IMR-90 (cell line): ENCODE measurements at regions of chr6 and their contacts with region 1.

Region 1: GRCh38 chr6:56637640-56638039 is 5.0 kb downstream of the DST start:
- DNase-seq: peak; percentile 80
- ATAC-seq: peak; percentile 81
- H3K4me3 ChIP-seq: no peak overlapping the region
- H3K27ac ChIP-seq: no peak overlapping the region
- H3K4me1 ChIP-seq: peaks cover 5% of the 10 kb centered on the region
- H3K27me3 ChIP-seq: no peaks in the 10 kb centered on the region
- CTCF ChIP-seq: peak; percentile 74
- POLR2A ChIP-seq: no peak
- RAD21 ChIP-seq: peak; percentile 78

Region 2: GRCh38 chr6:56570413-56571359 is 67.0 kb before region 1 on chr6:
- CTCF ChIA-PET with region 1: no interaction called
- POLR2A ChIA-PET with region 1: no interaction called
- dilution Hi-C with region 1: no loop called
- in situ Hi-C with region 1: no loop called
- intact Hi-C with region 1: no loop called
- DNase-seq: peak; percentile 39
- ATAC-seq: peak; percentile 70
- H3K4me3 ChIP-seq: no peak overlapping the region
- H3K27ac ChIP-seq: no peak overlapping the region
- H3K4me1 ChIP-seq: peaks cover 2% of the 10 kb centered on the region; the same call in 1 of the 2 replicates
- H3K27me3 ChIP-seq: no peaks in the 10 kb centered on the region
- CTCF ChIP-seq: peak; percentile 44
- POLR2A ChIP-seq: no peak
- RAD21 ChIP-seq: peak; percentile 44; the same call in 1 of the 2 replicates

Region 3: DNA sequence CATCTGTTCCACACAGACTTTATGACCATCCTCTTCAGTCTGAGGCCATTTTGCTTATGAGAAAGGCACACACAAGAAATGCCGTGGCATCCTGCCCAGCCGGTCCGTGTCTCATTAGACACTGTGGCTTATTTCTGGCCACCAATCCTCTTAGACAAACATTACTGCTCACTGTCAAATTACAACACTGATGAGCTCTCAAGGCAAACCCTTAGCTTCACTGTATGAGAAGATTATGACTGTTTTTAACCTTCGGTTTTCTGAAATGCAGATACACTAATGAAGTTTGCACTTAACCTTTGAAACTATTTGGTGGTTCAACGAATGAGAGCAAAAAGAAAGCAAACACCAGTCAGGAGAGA is 55.6 kb after region 1 on chr6:
- CTCF ChIA-PET with region 1: interaction called, 3 read pairs
- POLR2A ChIA-PET with region 1: no interaction called
- dilution Hi-C with region 1: no loop called
- in situ Hi-C with region 1: loop called (anchors 5 kb)
- intact Hi-C with region 1: loop called (anchors 1 kb)
- DNase-seq: peak; percentile 87
- ATAC-seq: peak; percentile 47
- H3K4me3 ChIP-seq: peak overlapping the region; percentile 45; the same call in 1 of the 2 replicates
- H3K27ac ChIP-seq: peak overlapping the region; percentile 99; the same call in 1 of the 2 replicates
- H3K4me1 ChIP-seq: peaks cover 8% of the 10 kb centered on the region
- H3K27me3 ChIP-seq: no peaks in the 10 kb centered on the region
- CTCF ChIP-seq: no peak
- POLR2A ChIP-seq: peak; percentile 58; the same call in 1 of the 2 replicates
- RAD21 ChIP-seq: no peak

Region 4: DNA sequence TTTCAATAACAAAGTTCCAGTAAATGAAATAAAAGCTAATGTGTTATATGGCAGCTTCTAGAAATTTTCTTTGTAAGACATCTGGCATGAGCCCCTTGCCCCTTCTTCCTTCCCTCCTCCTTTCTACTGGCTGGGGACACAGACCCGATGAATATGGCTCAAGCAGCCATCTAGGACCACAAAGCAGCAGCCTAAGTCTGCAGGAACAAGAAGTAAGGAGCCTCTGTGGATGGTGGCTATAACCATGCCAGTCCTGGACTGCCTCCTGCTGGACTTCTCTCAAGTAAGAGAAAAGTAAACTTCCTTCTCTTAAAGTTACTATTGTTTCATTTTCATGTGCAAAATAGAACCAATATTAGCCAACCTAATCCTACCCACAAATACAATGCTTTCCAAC is 119.9 kb after region 1 on chr6:
- CTCF ChIA-PET with region 1: no interaction called
- POLR2A ChIA-PET with region 1: no interaction called
- dilution Hi-C with region 1: no loop called
- in situ Hi-C with region 1: no loop called
- intact Hi-C with region 1: loop called (anchors 2 kb)
- DNase-seq: peak; percentile 71
- ATAC-seq: peak; percentile 52
- H3K4me3 ChIP-seq: no peak overlapping the region
- H3K27ac ChIP-seq: peak overlapping the region; percentile 95
- H3K4me1 ChIP-seq: peaks cover 22% of the 10 kb centered on the region
- H3K27me3 ChIP-seq: no peaks in the 10 kb centered on the region
- CTCF ChIP-seq: peak; percentile 58
- POLR2A ChIP-seq: no peak
- RAD21 ChIP-seq: peak; percentile 66

Region 5: DNA sequence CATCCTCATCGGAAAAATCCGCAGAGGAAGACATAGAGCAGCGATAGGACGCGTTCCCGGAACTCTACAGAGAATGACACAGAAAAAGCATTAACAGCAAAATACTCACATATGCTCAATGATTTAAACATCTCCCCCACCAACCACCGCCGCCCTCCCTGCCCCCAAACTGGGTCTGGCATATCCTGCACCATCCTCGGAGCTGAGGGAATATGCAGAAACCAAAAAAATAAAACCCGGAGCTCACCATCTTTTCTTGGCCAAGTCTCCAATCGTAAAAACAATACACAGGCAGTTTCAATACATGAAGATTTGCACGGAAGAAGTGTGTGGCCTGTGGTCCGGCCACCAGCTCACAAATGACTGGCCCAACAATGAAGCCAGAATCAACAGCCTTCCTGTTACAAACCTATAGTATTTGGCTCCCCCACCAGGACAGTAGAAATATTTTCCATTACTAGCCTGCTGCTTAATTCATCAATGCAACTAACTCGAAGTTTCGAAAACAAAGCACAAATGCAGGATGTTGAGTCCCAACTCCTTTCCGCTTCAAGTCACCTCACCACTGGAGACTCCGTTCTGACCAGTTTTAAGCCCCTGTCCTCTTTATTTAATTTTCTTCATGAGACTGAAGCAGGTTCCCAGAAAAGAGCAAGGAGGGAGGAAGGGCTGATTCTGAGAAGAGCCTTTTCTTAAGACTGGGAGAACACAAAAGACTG is 214.1 kb after region 1 on chr6:
- CTCF ChIA-PET with region 1: interaction called, 11 read pairs
- POLR2A ChIA-PET with region 1: no interaction called
- dilution Hi-C with region 1: no loop called
- in situ Hi-C with region 1: loop called (anchors 10 kb)
- intact Hi-C with region 1: loop called (anchors 2 kb)
- DNase-seq: peak; percentile 89
- ATAC-seq: peak; percentile 76
- H3K4me3 ChIP-seq: peak overlapping the region; percentile 64
- H3K27ac ChIP-seq: peak overlapping the region; percentile 92
- H3K4me1 ChIP-seq: peaks cover 16% of the 10 kb centered on the region
- H3K27me3 ChIP-seq: no peaks in the 10 kb centered on the region
- CTCF ChIP-seq: peak; percentile 68
- POLR2A ChIP-seq: peak; percentile 72
- RAD21 ChIP-seq: peak; percentile 81

Region 6: GRCh38 chr6:57324538-57324937 is 686.9 kb after region 1 on chr6:
- CTCF ChIA-PET with region 1: no interaction called
- POLR2A ChIA-PET with region 1: no interaction called
- dilution Hi-C with region 1: no loop called
- in situ Hi-C with region 1: loop called (anchors 25 kb)
- intact Hi-C with region 1: loop called (anchors 5 kb)
- DNase-seq: peak; percentile 32
- ATAC-seq: peak; percentile 62
- H3K4me3 ChIP-seq: no peak overlapping the region
- H3K27ac ChIP-seq: no peak overlapping the region
- H3K4me1 ChIP-seq: peaks cover under 1% of the 10 kb centered on the region; the same call in 1 of the 2 replicates
- H3K27me3 ChIP-seq: no peaks in the 10 kb centered on the region
- CTCF ChIP-seq: peak; percentile 65
- POLR2A ChIP-seq: no peak
- RAD21 ChIP-seq: peak; percentile 60